Dorsolateral prefrontal cortex (tissue), 120 donors: ENCODE measurements at regions of chr1 and their contacts with region 1.

Region 1: GRCh38 chr1:15430787-15431570 is 7.3 kb upstream of the CTRC start:
- DNase-seq: peak in 9 of 10 donors; percentile 67 to 82 (median 76)
- H3K4me3 ChIP-seq: no peak overlapping the region
- H3K27ac ChIP-seq: peak overlapping the region in 6 of 59 donors; percentile 11 to 53 (median 31)
- H3K27me3 ChIP-seq: no peaks in the 10 kb centered on the region
- CTCF ChIP-seq: peak; percentile 83 to 99 (median 95)

Region 2: DNA sequence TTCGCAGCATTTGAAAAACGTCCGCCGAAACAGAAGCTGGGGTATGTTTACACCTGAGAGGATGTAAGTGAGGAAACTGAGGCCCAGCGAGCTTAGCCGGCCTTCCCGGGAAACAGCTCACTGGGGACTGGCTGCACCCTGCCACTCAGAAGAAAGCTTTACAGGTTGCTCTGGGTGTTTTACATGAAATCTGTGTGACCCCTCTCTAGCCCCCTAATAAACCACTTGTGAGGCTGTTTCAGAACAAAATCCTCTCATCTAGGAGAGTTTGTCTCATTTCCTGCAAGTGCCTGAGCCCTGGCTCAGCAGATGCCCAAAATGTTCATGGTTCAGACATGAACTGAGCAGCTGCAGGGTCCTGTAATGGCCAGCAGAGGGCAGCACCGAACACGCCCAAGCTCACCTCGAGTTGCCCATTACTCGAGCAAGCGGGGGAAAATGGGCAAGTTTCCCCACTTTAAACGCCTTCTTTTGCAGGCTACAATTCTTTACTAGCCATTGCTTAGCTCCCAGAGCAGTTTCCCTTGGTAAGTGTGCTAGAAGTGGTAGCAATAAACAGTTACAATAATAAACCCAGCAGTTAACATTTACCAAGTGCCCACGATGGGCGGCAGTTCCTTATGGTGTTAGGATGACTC is 107.5 kb before region 1 on chr1:
- intact Hi-C with region 1: loop called (anchors 1 to 2 kb)
- DNase-seq: peak; percentile 68 to 86 (median 79)
- H3K4me3 ChIP-seq: peak overlapping the region in 1 of 59 donors; percentile 25
- H3K27ac ChIP-seq: no peak overlapping the region
- H3K27me3 ChIP-seq: no peaks in the 10 kb centered on the region
- CTCF ChIP-seq: peak; percentile 97 to 100 (median 99)